Ovary (tissue), 10 donors: ENCODE measurements at regions of chr4 and their contacts with region 1.

Region 1: DNA sequence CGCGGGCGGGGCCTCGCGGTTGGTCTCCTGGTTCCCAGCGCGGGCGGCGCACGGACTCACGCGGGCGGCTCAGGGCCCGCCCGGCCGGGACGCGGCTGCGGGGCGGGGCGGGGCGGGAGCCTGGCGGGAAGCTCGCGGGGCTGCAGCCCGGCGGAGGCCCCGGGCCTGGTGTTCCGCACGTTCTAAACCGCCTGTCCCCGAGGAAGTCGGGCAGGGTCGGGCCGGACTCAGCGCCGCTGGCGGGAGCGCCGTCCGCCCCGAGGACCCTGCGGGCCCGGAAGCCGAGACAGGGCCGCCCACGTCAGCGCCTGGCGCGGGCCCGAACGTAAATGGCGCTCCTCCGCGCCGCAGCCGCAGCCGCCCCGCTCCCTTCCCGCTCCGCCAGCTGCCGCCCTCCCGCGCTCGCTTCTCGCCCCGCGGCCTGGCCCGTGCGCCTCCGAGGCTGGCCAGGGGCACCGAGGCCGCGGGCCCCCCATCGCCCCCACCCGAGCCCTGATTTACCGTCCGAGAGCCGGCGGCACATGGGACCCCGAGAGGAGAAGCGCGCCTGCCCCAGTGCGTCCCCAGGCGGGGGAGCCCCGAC is 309 bp upstream of the CTBP1 start:
- DNase-seq: peak; percentile 84 to 91 (median 87)
- H3K4me3 ChIP-seq: peak overlapping the region; percentile 83
- H3K27ac ChIP-seq: peak overlapping the region; percentile 76 to 97
- H3K4me1 ChIP-seq: peaks cover 38% of the 10 kb centered on the region
- H3K27me3 ChIP-seq: no peaks in the 10 kb centered on the region
- CTCF ChIP-seq: no peak
- EP300 ChIP-seq: no peak
- POLR2A ChIP-seq: no peak

Region 2: GRCh38 chr4:1207603-1208265 is 41.5 kb before region 1 on chr4:
- intact Hi-C with region 1: loop called in 1 of 4 experiments (anchors 5 kb)
- DNase-seq: peak; percentile 81 to 93 (median 86)
- H3K4me3 ChIP-seq: no peak overlapping the region
- H3K27ac ChIP-seq: peak overlapping the region; percentile 26 to 50
- H3K4me1 ChIP-seq: peaks cover 38% of the 10 kb centered on the region
- H3K27me3 ChIP-seq: no peaks in the 10 kb centered on the region
- CTCF ChIP-seq: no peak
- EP300 ChIP-seq: no peak
- POLR2A ChIP-seq: no peak

Region 3: DNA sequence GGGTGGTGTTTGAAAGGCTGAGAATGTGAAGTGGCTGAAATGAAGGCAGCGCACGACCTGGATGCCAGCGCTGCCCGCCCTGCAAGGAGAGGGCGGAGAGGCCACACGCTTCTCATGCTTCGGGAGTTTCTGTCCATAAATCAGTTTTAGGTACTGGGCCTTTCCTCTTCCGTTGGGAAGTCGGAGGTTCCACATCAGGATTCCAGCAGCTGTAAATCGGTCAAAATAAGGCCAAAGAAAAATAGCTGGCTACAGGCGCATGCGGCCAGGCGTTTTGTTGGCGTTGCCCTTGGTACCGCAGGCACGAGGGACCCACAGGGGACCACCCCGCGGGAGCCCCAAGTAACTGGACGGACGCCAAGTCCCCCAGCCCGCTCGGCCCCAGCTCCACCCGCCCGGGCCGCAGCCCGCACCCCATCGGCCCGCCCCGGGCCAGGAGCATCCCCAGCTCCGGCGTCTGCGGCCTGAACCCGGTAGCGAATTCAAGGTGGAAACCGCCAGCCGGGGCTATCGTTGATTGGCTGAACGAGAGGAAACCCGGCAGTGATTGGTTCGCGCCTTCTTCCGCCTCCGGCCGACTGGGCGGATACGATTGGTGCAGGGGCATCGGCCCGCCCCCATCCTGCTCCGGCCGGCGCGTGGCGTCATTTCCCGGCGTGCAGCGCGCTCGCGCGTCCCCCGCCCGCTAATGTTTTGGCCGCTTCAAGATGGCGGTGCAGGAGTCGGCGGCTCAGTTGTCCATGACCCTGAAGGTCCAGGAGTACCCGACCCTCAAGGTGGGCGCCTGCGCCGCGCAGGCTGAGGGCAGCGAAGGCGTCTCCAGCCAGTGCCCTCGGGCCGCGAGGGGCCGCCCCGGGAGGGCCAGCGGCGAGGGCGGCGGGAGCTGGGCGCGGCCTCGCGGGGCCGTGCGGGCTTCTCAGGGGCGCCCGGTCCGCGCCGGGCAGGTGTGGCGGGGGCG is 40.2 kb after region 1 on chr4 and contains the start of gene MAEA:
- intact Hi-C with region 1: loop called in 1 of 4 experiments (anchors 1 kb)
- DNase-seq: peak; percentile 94 to 98 (median 96)
- H3K4me3 ChIP-seq: peak within 1 kb of the TSS; percentile 97
- H3K27ac ChIP-seq: peak within 1 kb of the TSS; percentile 61 to 77
- H3K4me1 ChIP-seq: peaks cover 19% of the 10 kb centered on the region
- H3K27me3 ChIP-seq: no peaks in the 10 kb centered on the region
- CTCF ChIP-seq: no peak
- EP300 ChIP-seq: no peak
- POLR2A ChIP-seq: peak; percentile 56
- total RNA-seq, gene MAEA: 48.3 to 71.3 (median 56.7) TPM

Region 4: DNA sequence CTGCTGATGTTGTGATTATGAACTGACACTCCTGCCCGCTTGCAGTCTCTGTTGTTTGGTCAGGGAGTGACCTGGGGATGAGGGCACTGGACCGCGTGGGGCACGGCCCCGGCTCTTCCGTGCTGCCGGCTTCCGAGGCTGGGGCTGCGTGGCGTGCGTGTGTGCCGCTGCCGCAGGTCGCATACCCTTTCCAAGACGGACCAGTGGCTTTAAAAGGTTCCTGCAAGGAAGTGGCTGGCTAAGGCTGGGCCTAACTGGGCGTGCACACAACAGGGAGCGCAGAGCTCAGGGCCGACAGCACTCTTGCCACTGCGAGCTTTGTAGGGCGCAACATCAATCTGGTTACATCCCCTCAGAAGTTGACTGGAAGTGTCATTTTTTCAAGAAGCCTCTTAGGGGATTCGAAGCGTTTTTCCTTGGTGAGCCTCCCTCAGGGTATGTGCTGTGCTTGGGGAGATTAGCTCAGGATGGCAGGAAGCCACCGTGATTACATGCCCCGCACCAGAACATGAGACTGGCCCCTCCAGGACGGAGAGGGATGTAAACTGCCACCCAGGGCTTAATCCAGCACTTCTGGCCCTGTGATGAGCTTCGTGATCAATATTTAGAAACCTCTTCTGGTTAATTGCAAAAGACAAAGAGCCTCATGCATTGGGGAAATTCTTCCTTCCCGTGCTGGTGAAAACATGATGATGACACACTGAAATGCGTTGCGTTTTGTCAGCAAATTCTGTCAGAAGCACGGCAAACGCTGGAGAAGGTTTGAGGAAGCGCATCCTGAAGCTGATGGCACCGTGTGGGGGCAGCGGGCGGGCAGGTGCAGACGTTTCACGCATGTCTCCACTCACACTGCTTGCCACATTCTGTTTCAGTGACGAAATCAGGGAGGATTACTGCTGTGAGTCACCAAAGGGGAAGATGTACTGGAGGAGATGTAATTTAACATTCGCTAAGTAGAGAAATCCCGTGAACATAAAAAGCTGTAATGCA is 51.5 kb after region 1 on chr4:
- intact Hi-C with region 1: no loop called
- DNase-seq: no peak
- H3K4me3 ChIP-seq: no peak overlapping the region
- H3K27ac ChIP-seq: no peak overlapping the region
- H3K4me1 ChIP-seq: peaks cover 2% of the 10 kb centered on the region
- H3K27me3 ChIP-seq: no peaks in the 10 kb centered on the region
- CTCF ChIP-seq: no peak
- EP300 ChIP-seq: no peak
- POLR2A ChIP-seq: no peak

Region 5: DNA sequence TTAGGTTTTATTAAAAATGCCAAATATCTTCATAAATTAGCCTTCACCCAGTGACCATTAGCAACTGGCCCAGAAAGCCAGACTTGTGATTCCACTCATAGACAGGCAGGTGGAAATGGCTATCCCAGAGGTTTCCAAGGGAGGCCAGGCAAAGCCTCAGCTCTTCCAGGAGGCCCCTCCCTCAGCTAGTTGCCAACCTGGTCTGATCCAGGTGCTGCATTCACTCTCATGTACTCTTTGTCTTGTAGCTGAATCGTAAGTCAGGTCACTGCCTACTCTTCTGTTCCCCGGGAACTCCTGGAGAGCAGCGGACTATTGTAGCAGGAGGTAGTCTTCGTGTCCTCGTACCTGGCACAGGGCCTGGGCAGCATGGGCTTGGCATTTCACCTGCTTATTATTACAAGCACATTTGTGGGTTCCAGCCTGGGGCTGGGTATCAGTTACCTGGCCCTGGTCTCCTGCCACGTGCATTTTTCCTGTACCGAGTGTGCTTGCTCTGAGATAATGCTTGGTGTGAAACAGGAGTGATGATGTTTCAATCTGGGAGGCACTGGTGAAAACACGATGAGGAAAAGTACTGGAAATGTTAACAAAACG is 1388.8 kb after region 1 on chr4:
- intact Hi-C with region 1: no loop called
- DNase-seq: peak in 1 of 5 donors; percentile 12
- H3K4me3 ChIP-seq: no peak overlapping the region
- H3K27ac ChIP-seq: no peak overlapping the region
- H3K4me1 ChIP-seq: no peaks in the 10 kb centered on the region
- H3K27me3 ChIP-seq: no peaks in the 10 kb centered on the region
- CTCF ChIP-seq: no peak
- EP300 ChIP-seq: no peak
- POLR2A ChIP-seq: no peak